ENCODE measurements at regions of chr17 and their contacts with region 1.

Region 1: DNA sequence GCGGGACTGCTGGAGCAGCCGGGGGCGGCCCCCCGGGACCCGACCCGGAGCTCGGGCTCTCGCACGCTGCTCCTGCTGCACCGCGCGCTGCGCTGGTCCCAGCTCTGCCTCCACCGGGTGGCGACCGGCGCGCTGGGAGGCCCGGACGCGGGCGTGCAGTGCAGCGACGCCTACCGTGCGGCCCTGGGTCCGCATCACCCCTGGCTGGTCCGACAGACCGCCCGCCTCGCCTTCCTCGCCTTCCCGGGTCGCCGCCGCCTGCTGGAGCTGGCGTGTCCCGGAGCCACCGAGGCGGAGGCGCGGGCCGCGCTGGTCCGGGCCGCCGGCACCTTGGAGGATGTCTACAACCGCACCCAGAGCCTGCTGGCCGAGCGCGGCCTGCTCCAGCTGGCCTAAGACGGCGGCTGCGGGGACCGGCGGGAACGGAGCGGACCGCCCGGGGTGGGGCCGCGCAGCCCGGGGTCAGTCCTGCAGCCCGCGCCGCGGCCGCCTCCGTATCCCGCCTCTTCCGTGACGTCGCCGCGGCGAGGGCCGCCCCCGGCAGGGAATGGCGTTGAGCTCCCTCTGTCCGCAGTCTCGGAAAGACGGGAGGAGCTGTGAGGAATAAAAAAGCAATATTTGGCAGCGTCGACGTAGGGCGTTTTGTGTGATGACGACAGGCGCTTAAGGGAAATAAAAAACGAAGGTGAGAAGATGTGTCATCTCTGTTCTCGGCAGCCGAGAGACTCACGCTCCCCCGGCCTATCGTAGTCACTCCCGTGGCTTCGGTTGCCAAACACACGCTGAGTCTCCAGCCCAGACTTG is 1.3 kb downstream of the GLTPD2 start:
- DNase-seq: peak; percentile 95
- H3K4me3 Mint-ChIP-seq: peak overlapping the region; percentile 75
- H3K27ac Mint-ChIP-seq: peak overlapping the region; percentile 93
- H3K4me1 Mint-ChIP-seq: peaks cover 18% of the 10 kb centered on the region
- H3K27me3 Mint-ChIP-seq: no peaks in the 10 kb centered on the region
- CTCF ChIP-seq: peak; percentile 70

Region 2: GRCh38 chr17:4509401-4509800 is 280.7 kb before region 1 on chr17:
- CTCF ChIA-PET with region 1: no interaction called
- POLR2A ChIA-PET with region 1: no interaction called
- intact Hi-C with region 1: no loop called
- DNase-seq: no peak
- H3K4me3 Mint-ChIP-seq: no peak overlapping the region
- H3K27ac Mint-ChIP-seq: no peak overlapping the region
- H3K4me1 Mint-ChIP-seq: no peaks in the 10 kb centered on the region
- H3K27me3 Mint-ChIP-seq: no peaks in the 10 kb centered on the region
- CTCF ChIP-seq: no peak

Region 3: GRCh38 chr17:4733073-4733531 is 57.0 kb before region 1 on chr17:
- CTCF ChIA-PET with region 1: interaction called, 14 read pairs
- POLR2A ChIA-PET with region 1: interaction called, 10 read pairs
- intact Hi-C with region 1: loop called (anchors 1 kb)
- DNase-seq: no peak
- H3K4me3 Mint-ChIP-seq: no peak overlapping the region
- H3K27ac Mint-ChIP-seq: no peak overlapping the region
- H3K4me1 Mint-ChIP-seq: peaks cover 22% of the 10 kb centered on the region
- H3K27me3 Mint-ChIP-seq: no peaks in the 10 kb centered on the region
- CTCF ChIP-seq: no peak

Region 4: DNA sequence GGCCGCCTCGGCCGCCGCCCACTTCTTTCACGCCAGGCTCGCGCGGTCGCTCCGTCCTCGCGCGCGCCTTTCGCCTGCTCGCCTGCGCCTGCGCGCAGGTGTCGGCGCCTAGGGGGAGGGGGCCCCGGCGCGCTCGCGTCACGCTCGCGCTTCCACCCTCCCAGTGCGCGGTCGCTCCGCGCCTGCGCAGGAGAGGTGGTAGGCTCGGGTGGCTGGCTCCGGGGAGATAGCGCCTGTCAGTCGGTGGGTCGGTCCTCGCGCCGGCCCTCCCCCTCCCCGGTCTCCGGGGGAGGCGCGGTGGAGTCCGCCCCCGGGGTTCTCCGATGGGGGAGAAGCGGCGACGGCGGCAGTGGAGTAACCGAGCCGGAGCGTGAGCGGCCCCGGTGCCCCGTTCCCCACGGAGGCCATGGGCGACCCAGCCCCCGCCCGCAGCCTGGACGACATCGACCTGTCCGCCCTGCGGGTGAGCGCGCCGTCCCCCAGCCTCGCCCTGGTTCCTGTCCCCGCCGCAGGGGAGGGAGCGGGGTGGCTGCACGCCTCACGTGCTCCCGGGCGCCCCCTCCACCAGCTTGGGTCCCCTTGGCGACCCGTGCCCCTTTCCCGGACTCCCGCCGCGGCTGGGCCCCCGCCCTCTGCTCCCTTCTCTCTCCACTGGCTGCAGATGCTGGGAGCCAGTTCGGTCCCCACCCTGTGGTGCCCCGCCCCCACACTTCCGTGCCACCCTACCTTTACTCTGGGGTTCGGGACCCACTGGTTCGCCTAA is 43.3 kb after region 1 on chr17 and contains the start of gene MINK1:
- CTCF ChIA-PET with region 1: interaction called, 8 read pairs
- POLR2A ChIA-PET with region 1: interaction called, 24 read pairs
- intact Hi-C with region 1: loop called (anchors 1 kb)
- DNase-seq: peak; percentile 92
- H3K4me3 Mint-ChIP-seq: peak within 1 kb of the TSS; percentile 94
- H3K27ac Mint-ChIP-seq: peak within 1 kb of the TSS; percentile 90
- H3K4me1 Mint-ChIP-seq: peaks cover 32% of the 10 kb centered on the region
- H3K27me3 Mint-ChIP-seq: no peaks in the 10 kb centered on the region
- CTCF ChIP-seq: no peak
- total RNA-seq, gene MINK1: 106 and 124 TPM in 2 replicates

Region 5: GRCh38 chr17:4858882-4859260 is 68.8 kb after region 1 on chr17:
- CTCF ChIA-PET with region 1: interaction called, 7 read pairs
- POLR2A ChIA-PET with region 1: interaction called, 37 read pairs
- intact Hi-C with region 1: no loop called
- DNase-seq: peak; percentile 91
- H3K4me3 Mint-ChIP-seq: peak overlapping the region; percentile 83
- H3K27ac Mint-ChIP-seq: peak overlapping the region; percentile 89
- H3K4me1 Mint-ChIP-seq: peaks cover 55% of the 10 kb centered on the region
- H3K27me3 Mint-ChIP-seq: no peaks in the 10 kb centered on the region
- CTCF ChIP-seq: no peak

Region 6: DNA sequence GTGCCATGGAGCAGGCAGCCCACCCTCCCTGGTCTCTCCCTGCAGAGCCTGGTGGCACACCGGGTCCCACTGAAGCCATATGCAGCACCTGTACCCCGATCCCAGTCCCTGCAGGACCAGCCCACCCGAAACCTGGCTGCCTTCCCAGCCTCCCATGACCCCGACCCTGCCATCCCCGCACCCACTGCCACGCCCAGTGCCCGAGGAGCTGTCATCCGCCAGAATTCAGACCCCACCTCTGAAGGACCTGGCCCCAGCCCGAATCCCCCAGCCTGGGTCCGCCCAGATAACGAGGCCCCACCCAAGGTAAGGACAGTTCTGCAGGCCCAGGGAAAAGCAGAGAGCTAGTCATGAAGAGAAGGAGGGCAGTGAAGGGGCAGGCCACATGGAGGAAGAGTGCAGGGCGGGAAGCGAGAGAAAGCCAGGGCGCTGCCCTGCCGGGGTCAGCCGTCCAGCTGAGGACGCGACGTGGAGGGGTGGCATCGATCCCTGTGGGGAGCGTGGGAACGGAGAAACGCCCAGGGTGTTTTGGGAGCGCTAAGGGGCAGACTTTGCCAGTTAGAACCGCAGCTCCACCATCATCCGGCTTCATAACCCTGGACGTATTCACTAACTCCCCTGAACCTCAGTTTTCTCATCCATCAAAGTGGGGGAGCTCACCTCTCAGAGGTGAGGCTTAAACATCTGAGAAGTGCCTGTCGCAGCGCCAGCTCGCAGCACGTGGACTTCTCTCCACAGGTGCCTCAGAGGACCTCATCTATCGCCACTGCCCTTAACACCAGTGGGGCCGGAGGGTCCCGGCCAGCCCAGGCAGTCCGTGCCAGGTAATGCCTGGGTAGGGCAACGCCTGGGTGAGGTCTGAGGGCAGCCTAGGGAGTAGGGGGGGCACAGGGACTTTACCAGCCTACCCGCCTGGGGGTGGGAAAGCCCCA is 101.6 kb after region 1 on chr17:
- CTCF ChIA-PET with region 1: interaction called, 88 read pairs
- POLR2A ChIA-PET with region 1: interaction called, 9 read pairs
- intact Hi-C with region 1: loop called (anchors 1 kb)
- DNase-seq: no peak
- H3K4me3 Mint-ChIP-seq: no peak overlapping the region
- H3K27ac Mint-ChIP-seq: no peak overlapping the region
- H3K4me1 Mint-ChIP-seq: no peaks in the 10 kb centered on the region
- H3K27me3 Mint-ChIP-seq: no peaks in the 10 kb centered on the region
- CTCF ChIP-seq: no peak

Region 7: DNA sequence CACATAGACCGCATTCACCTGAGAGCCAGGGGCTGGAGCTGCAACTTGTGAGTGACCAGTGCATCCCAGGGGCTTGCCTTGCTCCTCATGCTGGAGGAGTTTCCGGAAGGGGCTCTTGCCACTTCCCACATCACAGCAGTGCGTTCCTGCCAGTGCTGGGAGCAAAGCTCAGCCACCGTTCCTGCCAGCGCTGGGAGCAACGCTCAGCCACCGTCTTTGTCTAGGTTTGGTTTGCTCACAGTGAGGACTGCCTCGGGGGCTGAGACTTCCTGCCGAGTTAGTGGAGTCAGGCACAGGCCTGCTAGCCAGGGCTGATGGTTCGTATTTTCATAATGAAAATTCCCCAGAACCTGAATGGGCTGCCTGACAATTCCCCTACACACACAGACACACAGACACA is 118.2 kb after region 1 on chr17:
- CTCF ChIA-PET with region 1: interaction called, 9 read pairs
- POLR2A ChIA-PET with region 1: interaction called, 25 read pairs
- intact Hi-C with region 1: loop called (anchors 1 kb)
- DNase-seq: peak; percentile 43
- H3K4me3 Mint-ChIP-seq: no peak overlapping the region
- H3K27ac Mint-ChIP-seq: no peak overlapping the region
- H3K4me1 Mint-ChIP-seq: peaks cover 5% of the 10 kb centered on the region
- H3K27me3 Mint-ChIP-seq: no peaks in the 10 kb centered on the region
- CTCF ChIP-seq: no peak

Region 8: GRCh38 chr17:4966844-4967538 is 176.9 kb after region 1 on chr17:
- CTCF ChIA-PET with region 1: interaction called, 3 read pairs
- POLR2A ChIA-PET with region 1: interaction called, 20 read pairs
- intact Hi-C with region 1: no loop called
- DNase-seq: peak; percentile 99
- H3K4me3 Mint-ChIP-seq: no peak overlapping the region
- H3K27ac Mint-ChIP-seq: no peak overlapping the region
- H3K4me1 Mint-ChIP-seq: peaks cover 15% of the 10 kb centered on the region
- H3K27me3 Mint-ChIP-seq: no peaks in the 10 kb centered on the region
- CTCF ChIP-seq: no peak